Breast epithelium (tissue), 4 donors: ENCODE measurements at regions of chr17 and their contacts with region 1.

Region 1: GRCh38 chr17:38550661-38551060 is 55.1 kb downstream of the SRCIN1 start:
- DNase-seq: peak in 1 of 2 donors; percentile 74
- H3K4me3 ChIP-seq: no peak overlapping the region
- H3K27ac ChIP-seq: no peak overlapping the region
- H3K4me1 ChIP-seq: no peaks in the 10 kb centered on the region
- H3K27me3 ChIP-seq: no peaks in the 10 kb centered on the region
- CTCF ChIP-seq: no peak
- POLR2A ChIP-seq: no peak

Region 2: GRCh38 chr17:38403491-38403890 is 147.2 kb before region 1 on chr17:
- intact Hi-C with region 1: no loop called
- DNase-seq: no peak
- H3K4me3 ChIP-seq: no peak overlapping the region
- H3K27ac ChIP-seq: no peak overlapping the region
- H3K4me1 ChIP-seq: no peaks in the 10 kb centered on the region
- H3K27me3 ChIP-seq: no peaks in the 10 kb centered on the region
- CTCF ChIP-seq: no peak
- POLR2A ChIP-seq: no peak

Region 3: GRCh38 chr17:38536661-38537060 is 14.0 kb before region 1 on chr17:
- intact Hi-C with region 1: loop called (anchors 1 kb)
- DNase-seq: no peak
- H3K4me3 ChIP-seq: no peak overlapping the region
- H3K27ac ChIP-seq: no peak overlapping the region
- H3K4me1 ChIP-seq: no peaks in the 10 kb centered on the region
- H3K27me3 ChIP-seq: no peaks in the 10 kb centered on the region
- CTCF ChIP-seq: no peak
- POLR2A ChIP-seq: no peak

Region 4: GRCh38 chr17:38584350-38584925 is 33.8 kb after region 1 on chr17:
- intact Hi-C with region 1: no loop called
- DNase-seq: peak; percentile 85 to 91
- H3K4me3 ChIP-seq: peak overlapping the region in 2 of 3 donors; percentile 2 to 35
- H3K27ac ChIP-seq: peak overlapping the region; percentile 89 to 90
- H3K4me1 ChIP-seq: peaks cover 0 to 9% of the 10 kb centered on the region in 2 donors
- H3K27me3 ChIP-seq: no peaks in the 10 kb centered on the region
- CTCF ChIP-seq: peak; percentile 96 to 98 (median 96)
- POLR2A ChIP-seq: no peak